ENCODE measurements at regions of chr22 and their contacts with region 1.

Region 1: DNA sequence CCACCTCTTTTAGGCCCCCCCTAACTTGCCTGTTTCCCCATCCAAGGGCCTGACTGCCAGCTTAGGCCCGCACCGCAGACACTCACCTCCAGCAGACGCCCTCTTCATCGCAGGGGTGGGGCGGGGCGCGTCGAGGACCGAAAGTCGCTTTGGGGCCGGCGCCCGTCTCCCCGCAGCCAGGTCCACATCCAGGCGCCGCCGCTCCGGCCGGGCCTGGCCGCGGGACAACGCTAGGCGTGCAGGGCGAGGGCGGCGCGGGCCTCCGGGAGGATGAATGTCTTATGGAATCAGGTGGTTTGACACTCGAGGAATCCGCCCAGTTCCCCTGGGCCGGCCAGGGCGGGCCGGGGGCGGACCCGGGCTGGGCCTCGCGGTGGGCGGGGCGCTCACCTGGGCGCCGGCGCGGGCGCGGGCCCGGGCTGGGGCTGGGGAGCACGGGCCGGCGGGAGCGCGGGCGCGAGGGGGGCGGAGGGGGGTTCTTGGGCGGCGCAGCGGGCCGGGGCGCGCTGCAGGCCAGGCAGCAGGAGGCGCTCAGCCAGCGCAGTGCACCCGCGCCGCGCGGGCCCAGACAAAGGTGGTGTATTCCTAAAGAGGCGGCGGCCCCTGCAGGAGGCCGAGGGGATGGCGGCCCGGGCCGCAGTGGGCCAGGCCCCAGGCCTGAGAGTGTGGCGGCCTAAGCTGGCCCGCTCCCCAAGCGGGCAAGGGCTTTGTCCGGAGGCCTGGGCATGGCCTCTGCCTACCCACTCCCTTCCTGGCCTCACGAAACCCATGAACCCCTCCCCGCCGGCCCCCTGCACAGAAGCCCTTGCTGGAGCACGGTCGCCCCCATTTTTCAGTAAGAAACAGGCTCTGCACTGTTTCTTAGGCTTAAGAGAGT is 177.6 kb downstream of the IGLL1 start:
- DNase-seq: no peak
- H3K4me3 ChIP-seq: peak overlapping the region; percentile 45 to 57 (median 52)
- H3K27ac ChIP-seq: peak overlapping the region; percentile 22 to 41 (median 38)
- H3K4me1 ChIP-seq: peaks cover 4 to 17% (median 12%) of the 10 kb centered on the region in 4 donors
- H3K27me3 ChIP-seq: peaks cover 0 to 19% (median 0%) of the 10 kb centered on the region in 4 donors
- CTCF ChIP-seq: peak; percentile 49 to 72 (median 66)
- EP300 ChIP-seq: no peak
- POLR2A ChIP-seq: no peak

Region 2: DNA sequence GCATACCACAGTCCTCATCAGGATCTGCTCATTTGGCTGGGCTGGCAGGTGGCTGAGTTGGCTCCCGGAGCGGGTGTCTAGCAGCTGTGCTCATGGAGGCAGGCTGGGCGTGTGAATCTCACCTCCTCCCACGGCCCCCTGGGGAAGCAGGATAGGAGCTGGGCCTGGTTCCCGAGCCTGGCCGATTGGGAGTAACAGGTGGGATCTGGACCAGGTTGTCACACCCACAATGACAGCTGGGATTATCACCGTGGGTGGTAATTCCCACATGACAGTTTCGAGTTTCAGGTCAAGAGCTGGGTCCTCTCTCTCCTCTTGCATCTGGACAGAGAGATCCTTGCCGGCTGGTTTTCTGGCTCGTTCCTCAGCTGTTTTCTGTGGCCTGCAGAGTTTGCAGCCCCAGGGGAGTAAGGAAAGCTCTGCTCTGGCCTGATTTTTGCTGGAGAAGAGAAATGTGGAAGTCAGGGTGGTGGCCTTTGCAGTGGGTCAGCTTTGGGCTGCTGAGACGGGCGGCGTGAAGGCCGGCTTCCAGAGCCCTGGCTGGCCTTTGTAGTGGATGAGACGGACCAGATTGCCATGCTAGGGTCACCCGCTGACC is 165.2 kb before region 1 on chr22:
- intact Hi-C with region 1: no loop called
- DNase-seq: peak; percentile 94
- H3K4me3 ChIP-seq: no peak overlapping the region
- H3K27ac ChIP-seq: peak overlapping the region in 3 of 4 donors; percentile 12 to 47 (median 30)
- H3K4me1 ChIP-seq: peaks cover 27 to 66% (median 60%) of the 10 kb centered on the region in 4 donors
- H3K27me3 ChIP-seq: no peaks in the 10 kb centered on the region
- CTCF ChIP-seq: no peak
- EP300 ChIP-seq: no peak
- POLR2A ChIP-seq: no peak

Region 3: DNA sequence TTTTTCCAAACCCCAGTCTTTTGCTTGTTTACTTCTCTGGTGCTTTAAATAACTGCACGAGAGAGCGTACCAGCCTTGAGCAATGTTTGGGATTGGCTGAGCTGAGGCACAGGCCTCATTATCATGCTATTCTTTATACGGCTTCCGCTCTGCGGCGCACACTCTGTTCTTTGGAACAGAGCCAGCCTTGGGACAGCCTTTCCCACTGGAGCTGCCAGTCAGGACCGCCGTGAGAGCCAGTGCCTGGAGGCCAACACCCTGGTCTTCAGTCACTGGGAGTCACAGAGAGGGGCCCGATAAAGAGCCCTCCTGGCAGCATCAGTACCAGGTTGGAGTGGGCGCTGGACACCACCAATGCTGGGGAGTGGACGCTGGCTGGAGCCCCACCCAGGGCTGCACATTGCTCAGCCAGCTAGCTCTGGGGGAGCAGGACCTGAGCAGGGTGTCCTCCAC is 96.6 kb before region 1 on chr22:
- intact Hi-C with region 1: no loop called
- DNase-seq: no peak
- H3K4me3 ChIP-seq: peak overlapping the region in 1 of 4 donors; percentile 7
- H3K27ac ChIP-seq: peak overlapping the region; percentile 69 to 88 (median 82)
- H3K4me1 ChIP-seq: peaks cover 24 to 37% (median 29%) of the 10 kb centered on the region in 4 donors
- H3K27me3 ChIP-seq: no peaks in the 10 kb centered on the region
- CTCF ChIP-seq: no peak
- EP300 ChIP-seq: peak; percentile 40
- POLR2A ChIP-seq: no peak

Region 4: DNA sequence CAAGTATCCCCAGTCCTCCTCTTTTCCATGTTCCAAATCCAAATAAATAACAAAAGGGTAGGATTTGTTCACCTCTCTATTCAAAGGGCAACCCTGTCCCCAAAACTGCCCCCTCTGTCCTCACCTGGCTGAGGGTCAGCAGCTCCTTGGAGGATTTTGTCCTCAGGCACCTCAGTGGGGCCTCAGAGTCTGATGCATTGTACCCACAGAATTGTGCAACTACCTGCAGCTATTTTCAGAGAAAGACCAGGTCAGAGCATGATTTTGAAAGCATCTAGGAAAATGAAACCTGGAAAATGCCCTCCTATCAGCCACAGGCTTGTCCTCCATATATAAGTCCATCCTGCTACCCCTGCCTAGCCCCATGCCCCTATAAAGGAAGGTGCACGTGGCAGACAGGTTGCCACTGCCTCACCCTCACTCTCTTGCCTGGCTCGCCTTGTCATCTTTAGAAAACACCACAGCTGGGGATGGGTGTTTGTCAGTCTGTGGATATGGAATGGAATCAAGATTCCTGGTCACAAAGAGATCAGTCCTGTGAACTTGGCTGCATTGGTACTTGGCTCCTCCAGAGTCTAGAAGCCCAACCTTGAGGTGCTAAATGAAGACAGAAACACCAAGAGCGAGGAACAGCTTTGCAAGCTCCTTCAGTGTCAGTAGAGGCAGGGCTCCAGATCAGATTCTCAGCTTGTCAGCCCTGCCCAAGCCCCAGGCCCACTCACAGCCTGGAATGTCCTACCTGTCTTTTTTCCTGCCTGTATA is 33.7 kb before region 1 on chr22:
- intact Hi-C with region 1: no loop called
- DNase-seq: peak; percentile 90
- H3K4me3 ChIP-seq: no peak overlapping the region
- H3K27ac ChIP-seq: no peak overlapping the region
- H3K4me1 ChIP-seq: peaks cover 0 to 2% (median under 1%) of the 10 kb centered on the region in 4 donors
- H3K27me3 ChIP-seq: no peaks in the 10 kb centered on the region
- CTCF ChIP-seq: no peak
- EP300 ChIP-seq: no peak
- POLR2A ChIP-seq: no peak

Region 5: DNA sequence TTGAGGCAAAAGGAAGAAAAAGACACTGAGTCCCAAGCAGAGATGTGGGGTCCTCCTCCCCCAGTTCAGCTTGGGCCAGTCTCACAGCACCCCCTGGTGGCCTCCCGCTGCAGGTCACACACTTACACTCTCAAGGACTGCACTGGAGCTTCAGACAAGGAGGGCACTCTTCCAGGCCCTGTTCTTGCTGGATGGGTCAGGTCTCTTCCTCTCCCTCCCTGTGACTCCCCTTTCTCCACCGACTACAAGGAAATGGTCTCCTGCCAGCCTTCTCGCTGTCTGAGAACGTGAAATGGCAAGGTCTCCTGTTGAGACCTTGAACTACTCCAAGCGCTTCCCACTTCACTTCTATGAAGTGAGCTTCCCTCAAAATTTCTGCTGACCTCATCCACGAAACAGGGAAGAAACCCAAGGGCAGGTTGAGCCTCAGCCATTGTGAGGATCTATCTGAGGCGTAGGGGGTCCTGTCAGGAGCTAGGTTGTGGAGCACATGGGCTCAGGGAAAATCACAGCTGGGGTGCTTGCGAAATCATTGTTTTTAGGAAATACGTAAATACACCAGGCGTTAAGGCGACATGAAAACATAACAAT is 188.8 kb after region 1 on chr22:
- intact Hi-C with region 1: loop called (anchors 5 kb)
- DNase-seq: no peak
- H3K4me3 ChIP-seq: no peak overlapping the region
- H3K27ac ChIP-seq: no peak overlapping the region
- H3K4me1 ChIP-seq: no peaks in the 10 kb centered on the region
- H3K27me3 ChIP-seq: no peaks in the 10 kb centered on the region
- CTCF ChIP-seq: peak; percentile 60 to 76 (median 69)
- EP300 ChIP-seq: no peak
- POLR2A ChIP-seq: no peak

Measured in esophagus muscularis mucosa (tissue), 4 donors.